A673 (cell line): ENCODE measurements at regions of chr22 and their contacts with region 1.

Region 1: DNA sequence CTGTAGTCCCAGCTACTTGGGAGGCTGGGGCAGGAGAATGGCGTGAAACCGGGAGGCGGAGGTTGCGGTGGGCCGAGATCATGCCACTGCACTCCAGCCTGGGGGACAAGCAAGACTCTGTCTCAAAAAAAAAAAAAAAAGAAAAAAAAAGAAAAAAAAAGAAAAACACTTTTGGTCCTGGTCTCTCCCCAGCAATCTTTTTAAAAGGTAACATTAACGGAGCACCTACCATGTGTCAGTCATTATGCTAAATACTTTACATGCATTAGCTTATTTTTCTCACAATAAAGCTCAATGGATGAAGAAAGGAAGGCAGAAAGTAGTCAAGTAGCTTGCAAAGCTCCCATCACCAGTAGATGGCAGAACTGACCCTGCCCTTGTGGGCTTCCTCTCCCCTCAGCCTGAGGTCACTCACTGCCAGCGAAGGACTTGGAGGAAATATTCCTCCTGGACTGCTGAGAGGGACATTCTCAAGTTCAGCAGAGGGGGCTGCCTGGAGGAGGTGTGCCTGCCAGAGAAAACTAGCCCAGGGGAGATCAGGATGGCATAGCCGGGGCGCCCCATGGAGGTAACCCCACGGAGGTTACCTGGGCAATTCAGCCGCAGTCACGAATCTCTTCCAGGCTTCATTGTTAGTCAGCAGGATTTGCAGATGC is 15.5 kb downstream of the APOL3 start:
- DNase-seq: peak; percentile 69
- H3K4me3 ChIP-seq: no peak overlapping the region
- H3K27ac ChIP-seq: no peak overlapping the region
- H3K4me1 ChIP-seq: no peaks in the 10 kb centered on the region
- H3K27me3 ChIP-seq: no peaks in the 10 kb centered on the region
- CTCF ChIP-seq: peak; percentile 77

Region 2: GRCh38 chr22:35539910-35540594 is 605.0 kb before region 1 on chr22:
- CTCF ChIA-PET with region 1: no interaction called
- POLR2A ChIA-PET with region 1: no interaction called
- intact Hi-C with region 1: no loop called
- DNase-seq: peak; percentile 63
- H3K4me3 ChIP-seq: peak overlapping the region; percentile 54
- H3K27ac ChIP-seq: peak overlapping the region; percentile 21
- H3K4me1 ChIP-seq: peaks cover 45% of the 10 kb centered on the region
- H3K27me3 ChIP-seq: no peaks in the 10 kb centered on the region
- CTCF ChIP-seq: no peak

Region 3: GRCh38 chr22:35821654-35822053 is 323.4 kb before region 1 on chr22:
- CTCF ChIA-PET with region 1: no interaction called
- POLR2A ChIA-PET with region 1: no interaction called
- intact Hi-C with region 1: no loop called
- DNase-seq: no peak
- H3K4me3 ChIP-seq: no peak overlapping the region
- H3K27ac ChIP-seq: no peak overlapping the region
- H3K4me1 ChIP-seq: peaks cover 12% of the 10 kb centered on the region
- H3K27me3 ChIP-seq: no peaks in the 10 kb centered on the region
- CTCF ChIP-seq: no peak

Region 4: GRCh38 chr22:36180038-36180880 is 35.2 kb after region 1 on chr22:
- CTCF ChIA-PET with region 1: interaction called, 3 read pairs
- POLR2A ChIA-PET with region 1: no interaction called
- intact Hi-C with region 1: loop called (anchors 5 kb)
- DNase-seq: peak; percentile 78
- H3K4me3 ChIP-seq: no peak overlapping the region
- H3K27ac ChIP-seq: no peak overlapping the region
- H3K4me1 ChIP-seq: peaks cover 16% of the 10 kb centered on the region
- H3K27me3 ChIP-seq: no peaks in the 10 kb centered on the region
- CTCF ChIP-seq: peak; percentile 94

Region 5: DNA sequence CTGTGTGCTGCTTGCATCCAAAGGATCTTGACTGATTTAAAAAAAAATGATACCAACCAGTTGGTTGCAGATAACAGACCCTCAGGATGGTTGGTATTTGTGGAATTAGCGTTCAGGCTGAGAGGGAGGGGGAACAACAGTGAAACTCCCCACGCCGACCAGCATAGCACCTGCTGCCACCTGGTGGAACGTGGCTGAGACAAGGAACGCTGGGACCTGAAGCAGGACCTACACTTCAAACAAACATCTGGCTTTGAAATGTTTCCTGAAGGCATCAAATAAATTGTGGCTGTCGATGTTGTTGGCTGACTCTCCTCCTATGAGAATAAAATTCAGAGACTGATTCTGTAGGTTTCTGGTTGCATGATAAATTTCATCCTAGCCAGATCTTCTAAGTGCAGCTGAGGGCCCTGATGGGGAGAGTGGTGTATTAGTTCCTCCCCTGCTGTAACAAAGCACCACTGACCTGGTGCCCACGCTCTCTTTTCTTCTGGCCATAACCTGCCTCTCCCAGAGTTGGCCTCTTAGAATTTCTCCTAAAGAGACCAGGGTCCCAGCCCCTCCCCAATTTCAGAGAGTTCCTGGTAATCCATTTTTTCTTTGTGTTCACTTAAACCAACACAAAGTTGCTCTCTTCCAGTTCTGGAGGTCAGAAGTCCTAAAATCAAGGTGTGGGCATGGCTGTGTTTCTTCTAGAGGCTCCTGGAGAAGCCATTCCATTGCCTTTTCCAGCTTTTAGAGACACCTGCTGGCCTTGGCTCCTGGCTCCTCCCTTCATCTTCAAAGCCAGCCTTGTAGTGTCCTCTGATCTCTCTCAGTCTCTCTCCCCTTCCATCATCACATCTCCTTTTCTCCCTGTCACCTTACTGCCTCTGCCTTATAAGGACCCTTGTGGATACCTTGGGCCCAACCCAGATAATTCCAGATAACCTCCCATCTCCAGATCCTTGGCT is 77.1 kb after region 1 on chr22:
- CTCF ChIA-PET with region 1: no interaction called
- POLR2A ChIA-PET with region 1: no interaction called
- intact Hi-C with region 1: loop called (anchors 5 kb)
- DNase-seq: peak; percentile 49
- H3K4me3 ChIP-seq: no peak overlapping the region
- H3K27ac ChIP-seq: no peak overlapping the region
- H3K4me1 ChIP-seq: no peaks in the 10 kb centered on the region
- H3K27me3 ChIP-seq: no peaks in the 10 kb centered on the region
- CTCF ChIP-seq: peak; percentile 75

Region 6: DNA sequence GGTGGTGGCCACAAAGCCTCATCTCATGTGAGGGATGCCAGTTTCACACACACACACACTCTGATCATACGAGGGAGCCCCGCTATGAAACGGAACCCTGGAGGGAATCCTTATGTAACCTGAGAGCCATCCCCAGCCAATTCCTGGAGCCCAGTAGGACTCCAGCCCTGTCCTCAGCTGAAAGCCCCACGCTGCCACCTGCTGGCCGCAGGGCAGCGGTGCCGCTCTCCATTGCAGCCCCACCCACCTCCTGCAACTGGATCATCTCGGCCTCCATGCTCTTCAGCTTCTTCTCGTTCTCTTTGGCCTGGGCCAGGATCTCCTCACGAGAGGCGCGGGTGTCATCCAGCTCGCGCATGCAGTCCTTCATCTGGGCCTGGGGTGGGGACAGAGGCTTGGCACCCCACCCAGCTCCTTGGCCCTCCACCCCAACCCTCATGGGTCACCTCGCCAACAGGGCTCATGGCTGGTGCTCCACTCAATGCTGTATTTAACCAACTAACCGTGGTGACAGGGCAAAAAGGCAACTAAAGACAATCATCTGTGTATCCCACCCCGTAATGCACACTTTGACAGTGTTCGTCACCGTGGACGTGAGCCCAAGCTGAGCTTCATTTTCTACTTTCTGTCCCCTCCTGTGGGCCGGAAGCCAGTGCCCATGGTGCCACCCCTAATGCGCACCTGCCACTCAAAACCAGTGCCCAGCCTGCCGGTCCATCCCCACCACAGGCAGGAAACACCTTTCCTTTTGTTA is 141.6 kb after region 1 on chr22:
- CTCF ChIA-PET with region 1: no interaction called
- POLR2A ChIA-PET with region 1: no interaction called
- intact Hi-C with region 1: loop called (anchors 5 kb)
- DNase-seq: peak; percentile 89
- H3K4me3 ChIP-seq: no peak overlapping the region
- H3K27ac ChIP-seq: peak overlapping the region; percentile 41
- H3K4me1 ChIP-seq: peaks cover 4% of the 10 kb centered on the region
- H3K27me3 ChIP-seq: no peaks in the 10 kb centered on the region
- CTCF ChIP-seq: peak; percentile 98

Region 7: GRCh38 chr22:36470162-36470993 is 325.4 kb after region 1 on chr22:
- CTCF ChIA-PET with region 1: interaction called, 10 read pairs
- POLR2A ChIA-PET with region 1: no interaction called
- intact Hi-C with region 1: no loop called
- DNase-seq: peak; percentile 89
- H3K4me3 ChIP-seq: no peak overlapping the region
- H3K27ac ChIP-seq: no peak overlapping the region
- H3K4me1 ChIP-seq: peaks cover 19% of the 10 kb centered on the region
- H3K27me3 ChIP-seq: no peaks in the 10 kb centered on the region
- CTCF ChIP-seq: peak; percentile 95